Posterior vena cava (tissue), 2 donors: ENCODE measurements at regions of chr21 and their contacts with region 1.

Region 1: DNA sequence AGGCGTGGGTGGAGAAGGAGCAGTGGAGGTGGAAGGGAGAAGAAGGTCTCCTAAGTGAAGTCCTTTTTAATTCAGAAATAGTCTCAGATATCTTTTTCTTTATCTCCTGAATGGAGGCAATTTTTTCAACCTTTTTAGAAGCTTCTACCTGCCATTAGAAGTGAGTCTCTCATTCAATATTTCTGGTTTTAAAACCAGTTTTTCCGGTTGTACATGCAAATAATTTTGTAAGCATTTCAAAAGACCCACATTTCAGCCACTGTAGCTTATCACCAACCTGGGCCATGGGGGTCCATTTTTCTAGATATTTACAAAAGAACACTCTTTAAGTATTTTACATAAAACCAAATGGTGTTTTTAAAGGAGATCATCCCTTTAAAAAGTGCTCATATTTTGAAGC is 1280.2 kb downstream of the NCAM2 start:
- DNase-seq: no peak

Region 2: GRCh38 chr21:22263890-22264289 is 14.5 kb before region 1 on chr21:
- intact Hi-C with region 1: no loop called
- DNase-seq: peak; percentile 64

Region 3: GRCh38 chr21:22585558-22585957 is 307.2 kb after region 1 on chr21:
- intact Hi-C with region 1: loop called in 1 of 2 experiments (anchors 5 kb)
- DNase-seq: no peak